ENCODE measurements at regions of chr6 and their contacts with region 1.

Region 1: DNA sequence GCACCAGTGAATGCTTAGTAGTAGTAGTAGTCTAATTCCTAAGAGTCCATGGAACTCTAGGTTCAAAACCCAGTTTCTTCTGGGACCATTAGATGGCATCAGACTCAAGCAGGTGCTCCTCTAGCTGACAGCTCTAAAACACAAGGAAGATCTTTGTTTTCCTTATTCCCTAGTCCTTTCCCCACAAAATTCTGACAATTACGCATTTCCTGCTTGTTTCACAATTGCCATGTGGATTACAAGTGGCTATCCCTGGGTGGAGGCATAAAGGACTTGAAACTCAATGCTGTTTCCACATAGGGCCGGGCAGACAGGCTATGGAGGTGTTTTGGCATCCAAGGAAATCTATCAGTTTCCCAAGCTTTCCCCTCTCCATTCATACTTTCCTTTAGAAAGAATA is 9.2 kb upstream of the HLA-DOB start:
- DNase-seq: peak; percentile 87
- H3K4me3 Mint-ChIP-seq: no peak overlapping the region
- H3K27ac Mint-ChIP-seq: peak overlapping the region; percentile 49
- H3K4me1 Mint-ChIP-seq: peaks cover 7% of the 10 kb centered on the region
- H3K27me3 Mint-ChIP-seq: no peaks in the 10 kb centered on the region
- CTCF ChIP-seq: peak; percentile 42

Region 2: DNA sequence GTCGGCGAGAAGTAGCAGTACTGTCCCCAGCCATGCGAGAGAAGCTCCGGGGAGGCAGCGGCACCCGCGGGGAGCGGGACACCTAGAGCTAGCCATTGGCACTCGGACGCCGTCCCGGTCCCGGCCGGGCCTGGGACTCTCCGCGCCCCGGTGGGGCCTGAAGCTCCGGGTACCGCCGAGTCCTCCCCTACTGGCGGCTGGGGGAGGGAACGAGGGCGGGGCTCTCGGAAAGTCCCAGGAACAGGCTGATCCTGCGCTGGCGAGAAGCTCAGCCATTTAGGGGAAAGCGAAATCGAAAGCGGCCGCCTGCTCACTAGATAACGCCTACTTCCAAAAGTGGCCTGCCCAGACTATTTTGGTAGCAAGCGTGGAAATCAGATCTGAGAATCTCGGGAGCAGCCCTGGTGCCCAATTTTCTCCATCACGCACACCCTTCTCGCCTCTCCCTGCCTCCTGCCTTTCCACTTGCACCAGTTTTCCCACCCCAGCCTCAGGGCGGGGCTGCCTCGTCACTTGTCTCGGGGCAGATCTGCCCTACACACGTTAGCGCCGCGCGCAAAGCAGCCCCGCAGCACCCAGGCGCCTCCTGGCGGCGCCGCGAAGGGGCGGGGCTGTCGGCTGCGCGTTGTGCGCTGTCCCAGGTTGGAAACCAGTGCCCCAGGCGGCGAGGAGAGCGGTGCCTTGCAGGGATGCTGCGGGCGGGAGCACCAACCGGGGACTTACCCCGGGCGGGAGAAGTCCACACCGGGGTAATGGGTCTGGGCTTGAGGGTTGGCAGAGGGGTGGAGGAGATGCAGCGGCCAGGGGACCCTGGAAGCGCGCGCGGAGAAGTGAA is 27.8 kb after region 1 on chr6 and contains the starts of genes PSMB9 and TAP1:
- CTCF ChIA-PET with region 1: interaction called, 6 read pairs
- POLR2A ChIA-PET with region 1: interaction called, 16 read pairs
- intact Hi-C with region 1: loop called (anchors 1 kb)
- DNase-seq: peak; percentile 94
- H3K4me3 Mint-ChIP-seq: peak within 1 kb of the TSS; percentile 99
- H3K27ac Mint-ChIP-seq: peak within 1 kb of the TSS; percentile 94
- H3K4me1 Mint-ChIP-seq: peaks cover 21% of the 10 kb centered on the region
- H3K27me3 Mint-ChIP-seq: no peaks in the 10 kb centered on the region
- CTCF ChIP-seq: peak; percentile 51
- total RNA-seq, gene PSMB9: 3.5 and 4.4 TPM in 2 replicates
- total RNA-seq, gene TAP1: 32.3 and 35.2 TPM in 2 replicates